ENCODE measurements at regions of chr16 and their contacts with region 1.

Region 1: DNA sequence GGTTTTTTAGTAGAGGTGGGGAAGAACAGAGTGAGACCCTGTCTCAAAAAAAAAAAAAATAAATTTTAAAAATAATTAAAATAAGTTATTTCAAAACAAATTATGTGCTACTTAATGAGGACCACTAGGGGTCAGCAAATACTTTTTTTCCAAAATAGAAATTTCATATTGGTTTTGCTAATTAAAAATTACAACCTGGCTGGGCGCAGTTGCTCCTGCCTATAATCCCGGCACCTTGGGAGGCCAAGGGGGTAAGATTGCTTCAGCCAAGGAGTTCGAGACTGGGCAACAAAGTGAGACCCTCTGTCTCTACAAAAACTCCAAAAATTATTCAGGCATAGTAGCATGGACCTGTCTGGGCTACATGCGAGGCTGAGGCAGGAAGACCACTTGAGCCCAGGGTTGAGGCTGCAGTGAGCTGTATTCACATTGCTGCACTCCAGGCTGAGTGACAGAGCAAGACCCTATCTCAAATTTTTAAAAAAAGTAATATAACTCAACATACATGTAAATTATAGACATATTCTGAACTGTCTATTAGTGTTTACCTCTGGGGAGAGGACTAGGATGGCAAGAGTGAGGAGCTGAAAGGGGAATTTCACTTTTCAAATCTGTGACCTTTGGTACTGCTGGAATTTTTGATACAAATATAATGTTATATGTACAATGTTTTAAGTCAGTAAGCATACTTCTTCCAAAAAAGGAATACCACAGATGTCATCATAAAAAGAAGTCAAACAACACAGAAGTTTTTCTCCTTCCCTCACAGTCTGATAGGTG is 8.1 kb downstream of the MEIOB start:
- DNase-seq: no peak
- H3K4me3 Mint-ChIP-seq: no peak overlapping the region
- H3K27ac Mint-ChIP-seq: no peak overlapping the region
- H3K4me1 Mint-ChIP-seq: peaks cover 1% of the 10 kb centered on the region
- H3K27me3 Mint-ChIP-seq: peaks cover 16% of the 10 kb centered on the region

Region 2: DNA sequence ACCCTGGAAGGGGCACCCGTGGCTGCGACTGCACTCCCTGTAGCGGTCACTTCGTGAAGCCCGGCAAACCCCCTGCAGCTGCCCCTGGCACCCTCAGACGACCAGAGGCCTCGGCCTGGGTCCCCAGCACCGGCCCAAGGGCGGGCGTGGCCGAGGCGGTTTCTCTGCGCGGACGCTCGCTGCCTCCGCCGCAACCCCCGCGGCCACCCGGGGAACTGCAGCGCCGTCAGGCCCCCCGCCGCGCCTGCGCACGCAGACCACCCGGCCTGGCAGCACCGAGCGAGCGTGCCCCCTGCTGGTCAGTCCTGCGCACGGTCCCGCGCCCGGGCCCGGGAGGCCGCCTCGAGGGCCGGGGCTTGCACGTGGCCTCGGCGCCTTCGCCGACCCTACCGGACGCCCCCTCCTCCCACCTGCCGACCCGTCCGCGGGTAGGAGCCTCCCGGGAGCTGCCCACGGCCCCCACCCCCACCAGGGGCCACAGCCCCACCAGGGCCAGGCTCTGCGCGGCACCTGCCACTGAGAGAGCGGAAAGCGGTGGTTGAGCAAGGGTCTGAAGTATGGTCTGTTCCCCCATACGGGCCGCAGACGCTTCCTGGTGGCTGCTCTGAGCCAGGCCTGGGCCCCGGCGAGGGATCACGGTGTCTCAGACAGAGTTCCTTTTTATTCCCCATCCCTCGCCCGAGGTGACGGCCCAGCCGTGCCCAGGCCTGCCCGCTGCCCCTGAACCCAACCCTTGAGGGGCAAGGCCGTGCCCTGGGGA is 65.9 kb after region 1 on chr16:
- intact Hi-C with region 1: loop called (anchors 10 kb)
- DNase-seq: peak; percentile 88
- H3K4me3 Mint-ChIP-seq: peak overlapping the region; percentile 45
- H3K27ac Mint-ChIP-seq: no peak overlapping the region
- H3K4me1 Mint-ChIP-seq: peaks cover 2% of the 10 kb centered on the region
- H3K27me3 Mint-ChIP-seq: peaks cover 1% of the 10 kb centered on the region

Region 3: DNA sequence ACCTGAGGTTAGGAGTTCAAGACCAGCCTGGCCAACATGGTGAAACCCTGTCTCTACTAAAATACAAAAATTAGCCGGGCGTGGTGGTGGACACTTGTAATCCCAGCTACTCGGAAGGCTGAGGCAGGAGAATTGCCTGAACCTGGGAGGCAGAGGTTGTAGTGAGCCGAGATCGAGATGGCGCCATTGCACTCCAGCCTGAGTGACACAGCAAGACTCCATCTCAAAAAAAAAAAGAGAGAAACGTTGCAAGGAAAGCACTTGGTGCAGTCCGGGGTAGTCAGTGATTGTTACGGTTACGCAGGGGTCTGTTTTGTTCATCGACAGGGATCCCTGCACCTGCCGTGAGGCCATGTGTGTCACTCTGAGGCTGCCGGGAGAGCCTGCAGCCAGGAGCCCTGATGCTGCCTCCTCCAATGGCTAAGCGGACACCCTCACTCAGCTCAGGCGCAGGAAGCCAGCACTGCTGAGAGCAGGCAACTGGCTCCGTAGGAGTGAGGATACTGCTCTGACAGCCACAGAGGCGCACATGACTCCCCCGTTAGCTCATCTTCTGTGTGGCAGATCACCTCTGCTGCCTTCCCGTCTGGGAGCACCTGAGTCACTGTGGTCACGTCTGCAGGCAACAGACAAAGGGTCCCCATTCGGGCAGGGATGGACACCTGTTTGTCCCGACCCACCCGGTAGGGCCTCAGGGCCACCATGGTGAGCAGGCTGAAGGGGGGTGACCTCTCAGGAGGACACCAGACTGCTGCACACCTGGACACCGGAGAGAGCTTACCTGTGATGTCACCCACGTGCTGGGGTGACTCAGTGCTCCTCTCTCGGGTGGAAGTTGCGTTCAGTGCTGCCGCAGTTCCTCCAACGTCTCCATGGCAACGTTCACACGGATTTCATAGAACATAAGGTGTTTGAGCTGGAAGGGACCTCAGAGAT is 279.3 kb after region 1 on chr16:
- intact Hi-C with region 1: loop called (anchors 5 kb)
- DNase-seq: no peak
- H3K4me3 Mint-ChIP-seq: no peak overlapping the region
- H3K27ac Mint-ChIP-seq: no peak overlapping the region
- H3K4me1 Mint-ChIP-seq: peaks cover 4% of the 10 kb centered on the region
- H3K27me3 Mint-ChIP-seq: peaks cover 3% of the 10 kb centered on the region